Dendritic cell treated with granulocyte-macrophage colony-stimulating factor and Interleukin-4, amounts not matched to agents 40 ng/mL and 50 ng/mL, for 4 days (primary cell): ENCODE measurements at regions of chr7 and their contacts with region 1.

Region 1: DNA sequence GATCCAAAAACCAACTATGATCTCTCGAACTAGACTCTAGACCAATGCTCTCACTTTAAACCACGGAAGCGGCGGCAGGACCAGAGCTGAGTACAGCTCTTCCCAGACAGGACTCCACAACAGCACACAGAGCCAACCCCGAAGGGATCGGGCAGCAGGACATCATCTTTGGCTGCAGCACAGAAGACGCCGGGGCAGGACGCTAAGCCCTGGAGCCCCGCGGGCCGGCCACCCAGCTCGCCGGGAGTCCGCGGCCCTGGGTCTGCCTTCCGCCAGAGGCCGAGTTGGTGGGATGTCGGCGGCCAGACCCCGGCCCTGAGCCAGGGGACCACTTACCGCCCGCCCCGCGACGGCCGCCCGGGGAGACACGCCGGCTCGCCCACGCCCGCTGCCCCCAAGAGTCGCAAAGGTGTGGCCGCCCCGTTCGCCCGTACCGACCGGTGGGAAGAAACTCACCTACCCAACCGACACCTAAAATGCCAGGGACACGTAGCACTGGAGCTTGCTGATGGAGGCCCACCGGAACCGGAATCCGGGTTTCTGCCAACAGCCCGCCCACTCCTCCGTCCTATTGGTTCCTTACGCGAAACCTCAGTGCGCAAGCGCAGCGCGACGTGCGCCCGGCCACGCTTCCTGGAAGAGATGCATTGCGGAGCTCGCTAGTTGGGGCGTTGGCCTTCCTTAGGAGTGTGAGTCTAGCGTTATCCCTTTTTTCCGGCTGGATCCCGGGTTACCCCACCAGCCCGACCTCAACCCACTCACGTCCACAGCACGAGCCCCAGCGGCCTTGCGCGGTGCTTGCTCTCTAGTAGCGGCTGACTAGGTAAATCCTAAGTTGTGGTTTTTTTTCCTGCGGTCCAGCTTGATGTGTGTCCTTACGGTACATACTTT is at the start of gene SEC61G:
- H3K4me3 Mint-ChIP-seq: peak within 1 kb of the TSS; percentile 99
- H3K27ac Mint-ChIP-seq: peak within 1 kb of the TSS; percentile 93
- H3K4me1 Mint-ChIP-seq: peaks cover 23% of the 10 kb centered on the region
- H3K27me3 Mint-ChIP-seq: peaks cover 14% of the 10 kb centered on the region

Region 2: GRCh38 chr7:54846273-54846672 is 87.3 kb after region 1 on chr7:
- intact Hi-C with region 1: no loop called
- H3K4me3 Mint-ChIP-seq: no peak overlapping the region
- H3K27ac Mint-ChIP-seq: no peak overlapping the region
- H3K4me1 Mint-ChIP-seq: no peaks in the 10 kb centered on the region
- H3K27me3 Mint-ChIP-seq: peaks cover 3% of the 10 kb centered on the region

Region 3: GRCh38 chr7:55365675-55366460 is 606.9 kb after region 1 on chr7:
- intact Hi-C with region 1: loop called (anchors 5 kb)
- H3K4me3 Mint-ChIP-seq: peak overlapping the region; percentile 85
- H3K27ac Mint-ChIP-seq: peak overlapping the region; percentile 97
- H3K4me1 Mint-ChIP-seq: peaks cover 42% of the 10 kb centered on the region
- H3K27me3 Mint-ChIP-seq: peaks cover 11% of the 10 kb centered on the region